ENCODE measurements at regions of chr9 and their contacts with region 1.

Region 1: GRCh38 chr9:117644133-117644931 is 59.9 kb upstream of the TLR4 start:
- DNase-seq: peak; percentile 88
- H3K4me3 ChIP-seq: peak overlapping the region in 3 of 8 donors; percentile 6 to 51 (median 19)
- H3K27ac ChIP-seq: peak overlapping the region in 5 of 8 donors; percentile 51 to 72 (median 64)
- H3K4me1 ChIP-seq: peaks cover 0 to 37% (median 18%) of the 10 kb centered on the region in 6 donors
- H3K27me3 ChIP-seq: peaks cover 0 to 40% (median 5%) of the 10 kb centered on the region in 7 donors
- CTCF ChIP-seq: peak; percentile 90 to 98 (median 93)
- POLR2A ChIP-seq: no peak

Region 2: DNA sequence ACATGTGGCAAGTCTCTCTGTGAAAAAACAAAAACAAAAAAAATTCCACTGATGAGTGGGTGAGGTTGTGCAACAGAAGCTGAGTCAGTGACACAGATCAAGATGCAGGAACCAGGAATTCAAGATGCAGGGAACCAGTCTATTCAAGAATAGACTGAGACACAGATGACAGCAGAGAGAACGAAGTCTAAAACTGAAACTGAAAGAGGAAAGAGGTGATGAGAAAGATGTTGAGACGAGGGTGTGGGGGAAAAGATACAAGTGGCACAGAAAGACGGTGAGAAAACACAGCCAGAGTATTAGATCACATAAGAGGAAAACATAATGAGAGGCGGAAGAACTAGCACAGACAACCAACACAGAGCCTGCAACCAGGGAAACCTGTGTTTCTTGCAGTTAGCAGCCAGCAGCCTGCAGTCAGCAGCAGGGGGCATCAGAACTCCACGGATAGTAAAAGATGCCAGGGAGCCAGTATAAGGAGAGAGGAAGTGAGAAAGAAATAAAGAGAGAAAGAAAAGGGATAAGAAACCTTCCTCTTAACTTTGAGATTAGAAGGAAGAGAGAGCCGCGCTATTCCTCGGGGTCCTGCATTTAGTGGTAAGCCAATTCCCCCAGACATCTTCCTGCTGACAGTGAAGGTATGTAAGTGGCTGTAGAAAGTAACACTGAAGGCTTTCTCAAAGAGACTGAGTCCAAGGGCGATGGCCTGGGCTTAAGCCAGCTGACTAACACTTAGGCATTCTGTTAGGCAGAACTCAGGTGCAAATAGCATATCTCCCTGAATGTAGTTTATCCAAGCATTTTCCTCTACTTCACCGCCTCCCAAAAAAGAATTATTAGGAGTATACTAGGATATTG is 138.8 kb after region 1 on chr9:
- intact Hi-C with region 1: loop called (anchors 10 kb)
- DNase-seq: peak; percentile 85
- H3K4me3 ChIP-seq: peak overlapping the region; percentile 18 to 65 (median 32)
- H3K27ac ChIP-seq: peak overlapping the region; percentile 44 to 84 (median 80)
- H3K4me1 ChIP-seq: peaks cover 4 to 43% (median 28%) of the 10 kb centered on the region in 6 donors
- H3K27me3 ChIP-seq: no peaks in the 10 kb centered on the region
- CTCF ChIP-seq: peak; percentile 71 to 97 (median 86)
- POLR2A ChIP-seq: no peak

Measured in spleen (tissue), 13 donors.